Heart left ventricle (tissue), 16 donors: ENCODE measurements at regions of chrX and their contacts with region 1.

Region 1: GRCh38 chrX:74232859-74233258 is 71.1 kb upstream of the ZCCHC13 start:
- DNase-seq: no peak
- ATAC-seq: no peak
- H3K4me3 ChIP-seq: no peak overlapping the region
- H3K27ac ChIP-seq: no peak overlapping the region
- H3K4me1 ChIP-seq: peaks cover 0 to 6% (median 0%) of the 10 kb centered on the region in 12 donors
- H3K27me3 ChIP-seq: no peaks in the 10 kb centered on the region
- CTCF ChIP-seq: peak in 3 of 12 donors; percentile 8 to 14 (median 12)
- POLR2A ChIP-seq: no peak

Region 2: GRCh38 chrX:74286950-74287740 is 54.3 kb after region 1 on chrX:
- intact Hi-C with region 1: loop called in 1 of 10 experiments (anchors 10 kb)
- DNase-seq: no peak
- ATAC-seq: no peak
- H3K4me3 ChIP-seq: no peak overlapping the region
- H3K27ac ChIP-seq: no peak overlapping the region
- H3K4me1 ChIP-seq: peaks cover 0 to 53% (median 22%) of the 10 kb centered on the region in 12 donors
- H3K27me3 ChIP-seq: peaks cover 0 to 8% (median 0%) of the 10 kb centered on the region in 9 donors
- CTCF ChIP-seq: no peak
- POLR2A ChIP-seq: no peak